Heart right ventricle (tissue), 16 donors: ENCODE measurements at regions of chr19 and their contacts with region 1.

Region 1: GRCh38 chr19:10636304-10636972 is 11.1 kb downstream of the SLC44A2 start:
- DNase-seq: no peak
- ATAC-seq: peak in 1 of 8 donors; percentile 31
- H3K4me3 ChIP-seq: no peak overlapping the region
- H3K27ac ChIP-seq: no peak overlapping the region
- H3K4me1 ChIP-seq: peaks cover 0 to 37% (median 0%) of the 10 kb centered on the region in 9 donors
- H3K27me3 ChIP-seq: no peaks in the 10 kb centered on the region
- CTCF ChIP-seq: no peak

Region 2: GRCh38 chr19:10587790-10588150 is 48.7 kb before region 1 on chr19:
- intact Hi-C with region 1: loop called in 1 of 10 experiments (anchors 2 kb)
- DNase-seq: no peak
- ATAC-seq: no peak
- H3K4me3 ChIP-seq: no peak overlapping the region
- H3K27ac ChIP-seq: no peak overlapping the region
- H3K4me1 ChIP-seq: peaks cover 0 to 14% (median 0%) of the 10 kb centered on the region in 9 donors
- H3K27me3 ChIP-seq: peaks cover 0 to 30% (median 26%) of the 10 kb centered on the region in 7 donors
- CTCF ChIP-seq: no peak

Region 3: DNA sequence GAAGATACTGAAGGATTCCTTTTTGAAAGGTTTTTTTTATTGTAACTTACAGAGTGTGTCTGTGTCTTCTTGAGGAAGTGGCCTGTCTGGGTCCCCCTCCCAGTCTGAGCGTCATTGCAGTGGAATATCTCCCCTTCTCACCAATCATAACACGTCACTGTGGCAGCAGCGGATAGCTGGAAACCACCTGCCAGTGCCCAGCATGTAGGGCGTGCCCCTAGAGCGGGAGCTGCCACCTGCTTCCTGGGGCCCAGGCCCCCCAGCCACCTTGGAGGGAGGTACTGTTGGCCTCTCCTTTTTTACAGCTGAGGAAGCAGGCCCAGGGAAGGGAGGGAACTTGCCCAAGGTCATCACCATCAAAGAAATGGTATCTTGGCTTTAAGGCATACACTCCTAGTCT is 76.9 kb after region 1 on chr19:
- intact Hi-C with region 1: no loop called
- DNase-seq: no peak
- ATAC-seq: no peak
- H3K4me3 ChIP-seq: no peak overlapping the region
- H3K27ac ChIP-seq: no peak overlapping the region
- H3K4me1 ChIP-seq: peaks cover 0 to 8% (median 3%) of the 10 kb centered on the region in 9 donors
- H3K27me3 ChIP-seq: no peaks in the 10 kb centered on the region
- CTCF ChIP-seq: no peak